ENCODE measurements at regions of chr12 and their contacts with region 1.

Region 1: DNA sequence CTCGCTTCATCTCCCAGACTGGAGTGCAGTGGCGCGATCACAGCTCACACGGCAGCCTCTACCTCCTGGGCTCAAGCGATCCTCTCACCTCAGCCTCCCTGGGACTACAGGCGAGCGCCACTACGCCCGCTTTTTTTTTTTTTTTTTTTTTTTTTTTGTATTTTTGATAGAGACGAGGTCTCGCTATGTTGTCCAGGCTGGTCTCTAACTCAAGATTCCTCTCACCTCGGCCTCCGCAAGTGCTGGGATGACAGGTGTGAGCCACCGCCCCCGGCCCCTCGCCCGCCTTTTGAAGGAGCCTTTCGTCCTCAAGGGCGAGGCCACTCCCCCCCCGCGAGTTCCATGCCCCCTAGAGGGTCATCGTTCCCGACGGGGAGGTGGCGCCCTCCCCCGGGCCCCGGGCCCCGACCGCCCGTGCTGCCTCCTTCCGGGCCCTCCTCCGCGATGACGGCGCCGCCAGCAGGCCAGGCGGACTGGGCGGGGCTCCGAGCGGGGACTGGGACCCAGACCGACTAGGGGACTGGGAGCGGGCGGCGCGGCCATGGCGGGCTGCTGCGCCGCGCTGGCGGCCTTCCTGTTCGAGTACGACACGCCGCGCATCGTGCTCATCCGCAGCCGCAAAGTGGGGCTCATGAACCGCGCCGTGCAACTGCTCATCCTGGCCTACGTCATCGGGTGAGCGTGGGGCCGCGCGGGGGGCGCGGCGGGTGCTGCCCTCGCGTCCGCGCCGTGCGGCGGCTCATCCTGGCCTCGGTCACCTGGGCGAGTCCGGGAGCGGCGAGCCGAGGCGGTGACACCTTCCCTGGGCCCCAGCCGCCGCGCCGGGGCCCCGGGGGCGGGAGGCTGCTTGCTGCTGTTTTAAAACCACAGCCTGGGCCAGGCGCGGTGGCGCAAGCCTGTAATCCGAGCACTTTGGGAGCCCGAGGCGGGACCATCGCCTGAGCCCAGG is at the start of gene P2RX4:
- DNase-seq: peak; percentile 88 to 92 (median 90)
- H3K4me3 ChIP-seq: peak within 1 kb of the TSS; percentile 54 to 85
- H3K4me3 Mint-ChIP-seq: peak within 1 kb of the TSS; percentile 88 to 99 (median 93)
- H3K27ac ChIP-seq: peak within 1 kb of the TSS; percentile 91
- H3K27ac Mint-ChIP-seq: peak within 1 kb of the TSS; percentile 91 to 100 (median 98)
- H3K4me1 ChIP-seq: peaks cover 44% of the 10 kb centered on the region
- H3K4me1 Mint-ChIP-seq: peaks cover 16 to 45% (median 32%) of the 10 kb centered on the region in 4 donors
- H3K27me3 ChIP-seq: no peaks in the 10 kb centered on the region
- H3K27me3 Mint-ChIP-seq: no peaks in the 10 kb centered on the region
- total RNA-seq, gene P2RX4: 48.3 to 57.1 TPM

Region 2: GRCh38 chr12:121128970-121129810 is 80.7 kb before region 1 on chr12:
- CTCF ChIA-PET with region 1: interaction called, 4 read pairs
- POLR2A ChIA-PET with region 1: interaction called, 3 read pairs
- intact Hi-C with region 1: loop called (anchors 1 kb)
- DNase-seq: peak; percentile 79 to 88 (median 84)
- H3K4me3 ChIP-seq: peak overlapping the region; percentile 31 to 36
- H3K4me3 Mint-ChIP-seq: peak overlapping the region; percentile 79 to 91 (median 86)
- H3K27ac ChIP-seq: peak overlapping the region; percentile 53
- H3K27ac Mint-ChIP-seq: peak overlapping the region; percentile 88 to 97 (median 93)
- H3K4me1 ChIP-seq: peaks cover 70% of the 10 kb centered on the region
- H3K4me1 Mint-ChIP-seq: peaks cover 57 to 93% (median 68%) of the 10 kb centered on the region in 4 donors
- H3K27me3 ChIP-seq: no peaks in the 10 kb centered on the region
- H3K27me3 Mint-ChIP-seq: no peaks in the 10 kb centered on the region

Region 3: DNA sequence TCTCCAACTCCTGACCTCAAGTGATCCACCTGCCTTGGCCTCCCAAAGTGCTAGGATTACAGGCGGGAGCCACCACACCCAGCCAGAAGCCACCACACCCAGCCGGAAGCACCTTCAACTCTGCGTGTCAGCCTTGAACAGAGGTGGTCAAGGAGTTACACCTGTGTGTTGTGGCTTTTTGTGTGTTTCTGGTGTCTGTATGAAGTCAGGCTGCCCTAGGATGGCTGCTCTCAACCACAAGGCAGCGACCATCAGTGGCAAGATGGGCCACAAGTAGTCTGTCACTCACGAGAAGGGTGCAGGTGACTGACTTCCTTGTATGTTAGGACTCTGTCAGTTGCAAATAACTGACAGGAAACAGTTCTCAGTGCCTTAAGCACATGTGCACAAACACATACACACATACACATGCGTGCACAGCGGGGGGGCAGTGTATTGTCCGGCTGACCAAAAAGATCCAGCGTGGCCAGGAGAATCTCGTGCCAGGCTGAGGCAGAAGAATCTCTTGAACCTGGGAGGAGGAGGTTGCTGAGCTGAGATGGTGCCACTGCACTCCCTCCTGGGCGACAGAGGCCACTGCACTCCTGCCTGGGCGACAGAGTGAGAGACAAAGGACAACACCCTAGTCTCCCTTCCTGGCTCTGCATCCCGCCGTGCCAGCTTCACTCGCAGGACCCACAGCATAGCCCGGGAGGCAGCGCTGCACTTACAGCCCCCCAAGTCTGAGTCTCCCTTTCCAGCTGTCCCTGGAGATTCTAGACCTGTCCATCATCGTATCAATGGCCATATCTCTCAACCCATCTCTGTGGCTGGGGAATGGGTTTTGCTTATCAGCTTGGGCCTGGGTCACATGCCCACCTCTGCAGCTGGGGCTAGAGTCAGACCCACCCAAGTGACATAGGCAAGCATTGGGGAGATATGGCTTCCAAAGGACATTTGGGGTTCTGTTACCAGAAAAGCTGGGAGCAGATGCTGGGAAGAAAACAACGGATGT is 13.7 kb after region 1 on chr12:
- CTCF ChIA-PET with region 1: interaction called, 16 read pairs
- POLR2A ChIA-PET with region 1: interaction called, 113 read pairs
- intact Hi-C with region 1: no loop called
- DNase-seq: peak; percentile 34 to 64 (median 53)
- H3K4me3 ChIP-seq: peak overlapping the region in 1 of 2 donors; percentile 0
- H3K4me3 Mint-ChIP-seq: peak overlapping the region in 7 of 8 donors; percentile 19 to 84 (median 72)
- H3K27ac ChIP-seq: peak overlapping the region; percentile 47
- H3K27ac Mint-ChIP-seq: peak overlapping the region; percentile 86 to 97 (median 95)
- H3K4me1 ChIP-seq: peaks cover 52% of the 10 kb centered on the region
- H3K4me1 Mint-ChIP-seq: peaks cover 32 to 61% (median 44%) of the 10 kb centered on the region in 4 donors
- H3K27me3 ChIP-seq: no peaks in the 10 kb centered on the region
- H3K27me3 Mint-ChIP-seq: no peaks in the 10 kb centered on the region

Region 4: DNA sequence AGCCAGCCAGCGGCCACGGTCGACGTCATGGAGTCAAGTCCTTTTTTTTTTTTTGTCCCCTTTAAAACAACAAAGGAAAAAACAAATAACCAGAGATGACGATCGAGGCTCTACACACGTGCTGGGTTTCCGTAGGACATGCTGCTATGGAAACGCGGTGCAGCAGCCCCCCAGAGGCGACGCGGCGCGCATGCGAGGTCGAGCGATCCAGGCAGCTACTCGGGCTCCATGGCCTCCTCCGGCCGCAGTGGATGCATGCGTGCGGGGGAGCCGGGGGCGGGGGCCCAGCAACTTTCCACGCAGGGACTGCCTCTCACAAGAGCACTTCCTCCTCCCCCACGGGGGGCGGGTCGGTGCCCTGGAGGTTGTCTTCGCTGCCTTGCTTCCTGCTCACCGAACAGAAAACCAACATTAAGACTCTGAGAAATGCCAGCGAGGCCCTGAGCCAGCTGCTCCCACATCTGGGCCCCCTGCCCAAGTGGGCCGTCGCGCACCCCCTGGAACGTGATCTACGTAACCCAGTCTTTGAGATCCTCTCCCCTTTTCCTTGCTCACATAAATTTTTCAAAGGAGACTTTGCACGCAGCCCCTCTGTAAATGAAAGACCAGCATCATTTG is 30.7 kb after region 1 on chr12:
- CTCF ChIA-PET with region 1: interaction called, 4 read pairs
- POLR2A ChIA-PET with region 1: interaction called, 9 read pairs
- intact Hi-C with region 1: loop called (anchors 1 kb)
- DNase-seq: peak; percentile 94 to 98 (median 95)
- H3K4me3 ChIP-seq: peak overlapping the region; percentile 47 to 54
- H3K4me3 Mint-ChIP-seq: peak overlapping the region; percentile 82 to 92 (median 90)
- H3K27ac ChIP-seq: peak overlapping the region; percentile 76
- H3K27ac Mint-ChIP-seq: peak overlapping the region; percentile 95 to 100 (median 99)
- H3K4me1 ChIP-seq: peaks cover 38% of the 10 kb centered on the region
- H3K4me1 Mint-ChIP-seq: peaks cover 26 to 55% (median 38%) of the 10 kb centered on the region in 4 donors
- H3K27me3 ChIP-seq: no peaks in the 10 kb centered on the region
- H3K27me3 Mint-ChIP-seq: no peaks in the 10 kb centered on the region